ENCODE measurements at regions of chr15 and their contacts with region 1.

Region 1: DNA sequence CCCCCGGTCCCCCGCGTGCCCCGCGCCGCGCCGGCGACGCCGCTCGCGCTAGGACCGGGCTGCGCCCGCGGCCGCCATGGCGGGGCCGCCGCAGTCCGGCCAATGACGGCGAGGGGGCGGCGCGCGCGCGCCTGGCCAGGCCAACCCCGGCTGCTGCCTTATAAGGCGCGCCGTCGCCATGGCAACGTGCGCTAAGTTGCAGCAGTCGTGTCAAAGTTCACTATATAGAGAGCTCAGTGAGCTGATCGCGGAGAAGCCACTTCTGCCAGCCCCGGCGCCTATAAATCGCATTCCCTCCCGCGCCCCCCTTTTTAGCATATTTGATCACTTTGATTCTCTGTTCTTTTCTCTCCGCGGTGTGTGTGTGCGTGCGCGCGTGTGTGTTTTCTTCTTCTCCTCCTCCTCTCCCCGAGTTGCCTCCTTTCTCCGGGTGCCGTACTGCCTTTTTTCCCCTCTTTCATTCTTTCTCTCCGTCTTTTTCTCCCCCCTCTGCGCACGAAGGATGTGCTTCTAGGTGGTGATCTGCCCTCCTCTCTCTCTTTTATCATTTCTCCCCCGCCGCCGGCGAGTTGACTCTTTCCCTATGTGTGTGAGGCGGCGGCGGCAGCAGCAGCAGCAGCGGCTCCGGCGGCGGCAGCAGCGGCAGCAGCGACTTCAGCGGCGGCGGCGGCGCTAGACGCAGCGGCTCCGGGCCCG is at the start of gene NR2F2:
- DNase-seq: peak; percentile 97 to 99 (median 98)
- H3K4me3 ChIP-seq: peak within 1 kb of the TSS; percentile 73
- H3K27ac ChIP-seq: peak within 1 kb of the TSS; percentile 99
- H3K4me1 ChIP-seq: no peaks in the 10 kb centered on the region
- H3K27me3 ChIP-seq: no peaks in the 10 kb centered on the region
- CTCF ChIP-seq: no peak
- EP300 ChIP-seq: peak; percentile 57
- POLR2A ChIP-seq: peak; percentile 86
- total RNA-seq, gene NR2F2: 68.6 to 424 (median 343) TPM

Region 2: DNA sequence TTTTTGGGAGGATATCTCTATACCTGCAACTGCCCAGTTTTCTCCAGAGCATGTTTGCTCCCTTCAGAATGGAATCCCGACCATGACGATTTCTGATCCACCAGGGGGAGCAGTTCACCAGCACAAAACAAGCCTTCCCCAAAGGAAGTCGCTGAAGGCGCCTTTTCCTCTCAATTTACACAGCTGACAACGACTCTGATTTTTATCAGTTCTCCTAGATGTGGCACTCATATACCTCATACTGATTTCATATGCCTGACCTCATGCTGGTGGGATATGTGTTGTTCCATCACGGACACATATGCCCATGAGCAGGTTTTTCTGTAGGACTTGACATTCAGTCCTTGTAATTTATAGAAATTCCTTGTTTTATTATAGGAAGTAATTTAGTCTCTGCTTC is 1071.1 kb before region 1 on chr15:
- intact Hi-C with region 1: loop called in 2 of 4 experiments (anchors 5 to 10 kb)
- DNase-seq: peak; percentile 71 to 83 (median 74)
- H3K4me3 ChIP-seq: no peak overlapping the region
- H3K27ac ChIP-seq: peak overlapping the region in 1 of 2 donors; percentile 29
- H3K4me1 ChIP-seq: peaks cover 8% of the 10 kb centered on the region
- H3K27me3 ChIP-seq: no peaks in the 10 kb centered on the region
- CTCF ChIP-seq: peak; percentile 63 to 82 (median 78)
- EP300 ChIP-seq: no peak
- POLR2A ChIP-seq: no peak

Region 3: GRCh38 chr15:95284933-95285421 is 1045.6 kb before region 1 on chr15:
- intact Hi-C with region 1: loop called in 1 of 4 experiments (anchors 5 kb)
- DNase-seq: peak in 2 of 5 donors; percentile 29 to 44
- H3K4me3 ChIP-seq: no peak overlapping the region
- H3K27ac ChIP-seq: peak overlapping the region in 1 of 2 donors; percentile 64
- H3K4me1 ChIP-seq: peaks cover 12% of the 10 kb centered on the region
- H3K27me3 ChIP-seq: no peaks in the 10 kb centered on the region
- CTCF ChIP-seq: peak in 1 of 3 donors; percentile 39
- EP300 ChIP-seq: no peak
- POLR2A ChIP-seq: no peak

Region 4: GRCh38 chr15:95470997-95471689 is 859.5 kb before region 1 on chr15:
- intact Hi-C with region 1: loop called in 2 of 4 experiments (anchors 5 to 10 kb)
- DNase-seq: peak in 3 of 5 donors; percentile 58 to 67 (median 63)
- H3K4me3 ChIP-seq: no peak overlapping the region
- H3K27ac ChIP-seq: peak overlapping the region; percentile 26 to 77
- H3K4me1 ChIP-seq: peaks cover 12% of the 10 kb centered on the region
- H3K27me3 ChIP-seq: no peaks in the 10 kb centered on the region
- CTCF ChIP-seq: no peak
- EP300 ChIP-seq: no peak
- POLR2A ChIP-seq: no peak

Region 5: GRCh38 chr15:95875121-95875688 is 455.4 kb before region 1 on chr15:
- intact Hi-C with region 1: loop called in 2 of 4 experiments (anchors 10 kb)
- DNase-seq: peak in 4 of 5 donors; percentile 36 to 65 (median 50)
- H3K4me3 ChIP-seq: peak overlapping the region; percentile 2
- H3K27ac ChIP-seq: peak overlapping the region in 1 of 2 donors; percentile 72
- H3K4me1 ChIP-seq: peaks cover 10% of the 10 kb centered on the region
- H3K27me3 ChIP-seq: no peaks in the 10 kb centered on the region
- CTCF ChIP-seq: peak in 1 of 3 donors; percentile 32
- EP300 ChIP-seq: no peak
- POLR2A ChIP-seq: no peak

Region 6: DNA sequence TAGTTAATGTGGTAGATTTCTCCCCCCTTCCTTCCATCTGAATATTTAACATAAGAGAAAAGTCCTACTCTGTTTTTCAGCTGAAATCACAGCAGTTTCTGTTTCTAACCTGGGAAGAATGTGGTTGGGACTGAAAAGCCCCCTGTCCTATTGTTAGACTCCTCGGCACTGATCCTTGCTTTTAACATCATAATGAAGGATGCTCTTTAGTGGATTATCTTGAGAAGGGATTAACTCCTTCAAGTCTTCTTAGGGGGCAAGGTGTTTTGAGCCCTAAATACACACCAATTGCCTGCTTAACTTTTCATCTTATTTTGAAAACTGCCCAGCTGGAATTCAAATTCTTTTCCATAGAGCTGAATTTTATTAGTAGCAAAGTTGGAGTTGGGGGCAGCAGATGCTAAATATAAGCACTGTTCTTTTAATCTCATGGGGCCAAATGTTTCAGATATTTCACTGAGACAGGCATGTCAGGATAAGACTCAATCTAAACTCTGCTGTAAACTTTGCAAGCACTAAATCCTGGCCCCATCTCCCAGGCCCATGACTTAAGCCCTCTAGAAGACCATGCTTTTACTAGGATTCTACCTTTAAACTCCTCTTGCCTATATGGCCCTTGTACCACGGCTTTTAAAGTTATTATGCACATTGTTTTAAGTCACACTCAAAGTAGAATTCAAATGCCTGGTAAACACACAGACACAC is 243.3 kb before region 1 on chr15:
- intact Hi-C with region 1: no loop called
- DNase-seq: no peak
- H3K4me3 ChIP-seq: no peak overlapping the region
- H3K27ac ChIP-seq: no peak overlapping the region
- H3K4me1 ChIP-seq: peaks cover 2% of the 10 kb centered on the region
- H3K27me3 ChIP-seq: no peaks in the 10 kb centered on the region
- CTCF ChIP-seq: no peak
- EP300 ChIP-seq: no peak
- POLR2A ChIP-seq: no peak

Region 7: GRCh38 chr15:96181873-96182301 is 148.7 kb before region 1 on chr15:
- intact Hi-C with region 1: loop called in 1 of 4 experiments (anchors 10 kb)
- DNase-seq: peak; percentile 77 to 85 (median 81)
- H3K4me3 ChIP-seq: no peak overlapping the region
- H3K27ac ChIP-seq: peak overlapping the region; percentile 53 to 59
- H3K4me1 ChIP-seq: peaks cover 15% of the 10 kb centered on the region
- H3K27me3 ChIP-seq: no peaks in the 10 kb centered on the region
- CTCF ChIP-seq: no peak
- EP300 ChIP-seq: no peak
- POLR2A ChIP-seq: no peak

Region 8: GRCh38 chr15:96254168-96254567 is 76.4 kb before region 1 on chr15:
- intact Hi-C with region 1: no loop called
- DNase-seq: no peak
- H3K4me3 ChIP-seq: no peak overlapping the region
- H3K27ac ChIP-seq: no peak overlapping the region
- H3K4me1 ChIP-seq: no peaks in the 10 kb centered on the region
- H3K27me3 ChIP-seq: no peaks in the 10 kb centered on the region
- CTCF ChIP-seq: no peak
- EP300 ChIP-seq: no peak
- POLR2A ChIP-seq: no peak

Measured in ovary (tissue), 10 donors.